Ascending aorta (tissue), 2 donors: ENCODE measurements at regions of chr10 and their contacts with region 1.

Region 1: DNA sequence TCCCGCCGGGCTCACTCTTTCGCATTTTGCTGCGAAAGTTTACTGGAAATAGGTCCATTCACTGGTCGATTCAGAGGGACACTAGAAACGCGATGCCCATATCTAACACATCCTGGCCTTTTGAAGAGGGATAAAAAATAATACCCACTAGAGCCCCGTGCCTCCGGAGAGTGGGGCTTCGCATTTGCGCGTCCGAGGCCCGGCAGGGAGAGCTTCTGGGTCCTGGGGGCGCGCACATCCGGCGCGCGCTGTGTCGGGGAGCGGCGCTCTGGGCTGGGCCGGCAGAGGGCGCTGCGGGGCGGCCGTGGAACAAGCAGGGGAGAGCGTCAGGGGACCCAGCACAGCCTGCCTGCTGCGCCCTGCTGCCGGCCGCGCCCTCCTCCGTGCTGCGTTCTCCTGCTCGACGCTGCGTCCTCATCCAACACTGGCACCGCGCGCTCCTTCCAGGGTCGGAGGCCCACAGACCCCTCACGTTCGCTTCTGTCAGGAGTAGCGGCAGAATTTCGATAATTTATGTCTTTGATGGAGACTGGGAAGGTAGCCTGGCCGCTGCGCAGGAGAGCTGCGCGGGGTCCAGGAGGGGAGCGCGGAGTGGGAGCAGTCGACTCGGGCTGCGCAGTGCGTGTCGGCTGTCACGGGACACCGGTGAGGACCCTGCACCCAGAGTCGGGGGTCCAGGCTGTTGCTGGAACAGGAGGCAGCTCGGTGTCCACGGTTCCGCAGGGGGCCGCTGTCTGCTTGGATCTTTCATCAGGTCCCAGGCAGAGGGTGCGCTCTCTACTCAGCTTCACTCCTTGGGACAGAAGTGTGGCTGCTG is 41.5 kb upstream of the ZNF32 start:
- DNase-seq: peak in 1 of 2 donors; percentile 93
- H3K4me3 ChIP-seq: peak overlapping the region; percentile 57 to 87
- H3K27ac ChIP-seq: peak overlapping the region; percentile 79 to 87
- H3K4me1 ChIP-seq: peaks cover 4 to 10% of the 10 kb centered on the region in 2 donors
- H3K27me3 ChIP-seq: no peaks in the 10 kb centered on the region
- CTCF ChIP-seq: peak; percentile 88 to 95 (median 93)

Region 2: DNA sequence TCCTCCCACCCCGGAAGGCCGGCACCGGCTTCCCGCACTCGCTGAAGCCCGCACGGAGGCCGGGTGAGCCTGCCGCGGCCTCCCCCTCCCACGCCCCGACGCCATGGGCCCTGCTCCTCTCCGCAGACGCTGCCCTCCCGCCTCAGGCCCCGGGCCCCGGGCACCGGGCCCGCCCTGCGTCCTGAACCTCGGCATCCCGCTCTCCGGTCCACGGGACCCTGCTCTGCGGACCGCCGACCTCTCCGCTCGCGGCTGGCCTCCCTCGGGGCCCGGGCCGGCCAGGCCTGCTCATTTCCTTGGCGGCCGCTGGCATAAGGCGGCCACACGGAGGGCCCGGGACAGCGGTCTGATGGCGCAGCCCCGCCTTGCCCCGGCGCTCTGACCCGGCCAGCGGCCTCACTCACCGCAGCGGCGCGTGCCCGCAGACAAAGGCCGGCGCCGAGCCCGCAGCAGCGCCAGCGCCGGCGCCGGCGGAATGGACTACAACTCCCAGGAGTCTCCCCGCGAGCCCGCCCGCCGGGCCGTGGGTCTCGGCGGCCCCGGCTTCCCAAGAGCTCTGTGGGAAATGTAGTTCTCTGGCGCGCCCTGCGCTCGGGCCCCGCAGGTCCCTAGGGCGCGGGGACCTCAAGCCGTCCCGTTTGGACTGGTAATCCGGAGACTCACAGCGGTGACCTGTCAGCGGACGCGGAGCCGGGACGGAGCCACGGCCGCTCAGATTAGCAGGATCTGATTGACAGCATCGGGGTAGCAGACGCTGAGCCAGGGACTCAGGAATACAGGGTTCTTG is 41.6 kb before region 1 on chr10 and contains the start of gene ZNF32:
- intact Hi-C with region 1: no loop called
- DNase-seq: peak; percentile 32 to 90
- H3K4me3 ChIP-seq: peak within 1 kb of the TSS; percentile 85 to 95
- H3K27ac ChIP-seq: peak within 1 kb of the TSS; percentile 73 to 78
- H3K4me1 ChIP-seq: peaks cover 0 to 5% of the 10 kb centered on the region in 2 donors
- H3K27me3 ChIP-seq: no peaks in the 10 kb centered on the region
- CTCF ChIP-seq: no peak
- total RNA-seq, gene ZNF32: 10.9 TPM

Region 3: GRCh38 chr10:43816351-43817321 is 126.5 kb after region 1 on chr10:
- intact Hi-C with region 1: loop called (anchors 5 kb)
- DNase-seq: no peak
- H3K4me3 ChIP-seq: no peak overlapping the region
- H3K27ac ChIP-seq: peak overlapping the region; percentile 35 to 63
- H3K4me1 ChIP-seq: peaks cover 9 to 33% of the 10 kb centered on the region in 2 donors
- H3K27me3 ChIP-seq: no peaks in the 10 kb centered on the region
- CTCF ChIP-seq: no peak

Region 4: GRCh38 chr10:43863859-43864591 is 173.9 kb after region 1 on chr10:
- intact Hi-C with region 1: loop called (anchors 5 kb)
- DNase-seq: peak in 1 of 2 donors; percentile 85
- H3K4me3 ChIP-seq: no peak overlapping the region
- H3K27ac ChIP-seq: peak overlapping the region; percentile 77 to 89
- H3K4me1 ChIP-seq: peaks cover 0 to 25% of the 10 kb centered on the region in 2 donors
- H3K27me3 ChIP-seq: no peaks in the 10 kb centered on the region
- CTCF ChIP-seq: no peak

Region 5: DNA sequence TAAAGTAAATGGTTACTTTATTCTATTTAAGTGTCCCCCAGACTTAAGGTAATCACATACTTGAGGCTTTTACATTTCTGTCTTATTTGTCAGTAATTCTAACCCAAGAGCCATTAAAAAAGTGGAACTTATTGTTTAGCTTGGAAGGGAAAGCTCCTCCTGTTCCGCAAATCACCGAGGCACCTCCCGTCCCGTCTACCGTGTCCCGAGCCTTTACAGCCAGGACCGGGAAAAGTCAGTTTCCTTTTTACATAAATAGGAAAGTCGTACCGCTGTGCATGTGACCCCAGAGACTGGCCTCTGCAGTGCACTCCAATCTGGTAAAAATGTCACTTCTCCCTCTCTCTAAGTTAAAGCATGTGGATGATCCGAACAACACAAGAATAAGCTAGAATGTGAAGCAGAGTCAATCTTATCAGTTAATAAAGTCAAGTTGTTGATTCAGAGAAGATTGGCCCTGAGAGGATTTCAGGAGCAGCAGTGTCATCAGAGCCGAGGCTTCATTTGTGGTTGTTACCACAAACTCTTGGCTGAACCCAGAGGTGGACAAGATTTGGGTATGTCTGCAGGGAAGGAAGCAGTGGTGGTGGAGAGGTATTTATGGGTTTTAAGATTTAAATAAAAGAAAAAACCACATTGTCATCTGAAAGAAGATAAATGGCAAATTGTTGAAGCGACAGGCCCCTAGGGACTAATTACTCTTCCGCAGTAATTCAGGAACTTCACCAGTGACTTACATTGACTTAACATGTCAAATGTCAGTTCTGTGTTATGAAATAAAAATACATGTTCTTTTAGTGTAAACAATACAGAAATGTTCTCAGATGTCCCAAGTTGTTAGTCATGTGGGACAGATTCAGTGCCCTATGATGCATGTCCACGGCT is 275.1 kb after region 1 on chr10:
- intact Hi-C with region 1: loop called (anchors 5 kb)
- DNase-seq: peak in 1 of 2 donors; percentile 72
- H3K4me3 ChIP-seq: no peak overlapping the region
- H3K27ac ChIP-seq: peak overlapping the region; percentile 65 to 68
- H3K4me1 ChIP-seq: peaks cover 6 to 44% of the 10 kb centered on the region in 2 donors
- H3K27me3 ChIP-seq: no peaks in the 10 kb centered on the region
- CTCF ChIP-seq: no peak

Region 6: GRCh38 chr10:44046605-44047004 is 356.4 kb after region 1 on chr10:
- intact Hi-C with region 1: loop called (anchors 10 kb)
- DNase-seq: no peak
- H3K4me3 ChIP-seq: no peak overlapping the region
- H3K27ac ChIP-seq: no peak overlapping the region
- H3K4me1 ChIP-seq: peaks cover 6 to 9% of the 10 kb centered on the region in 2 donors
- H3K27me3 ChIP-seq: no peaks in the 10 kb centered on the region
- CTCF ChIP-seq: peak in 1 of 3 experiments; percentile 36

Region 7: GRCh38 chr10:44386546-44387052 is 696.4 kb after region 1 on chr10:
- intact Hi-C with region 1: loop called (anchors 1 kb)
- DNase-seq: peak in 1 of 2 donors; percentile 77
- H3K4me3 ChIP-seq: peak overlapping the region in 1 of 2 donors; percentile 28
- H3K27ac ChIP-seq: no peak overlapping the region
- H3K4me1 ChIP-seq: peaks cover 0 to 8% of the 10 kb centered on the region in 2 donors
- H3K27me3 ChIP-seq: no peaks in the 10 kb centered on the region
- CTCF ChIP-seq: peak; percentile 86 to 95 (median 91)